ENCODE measurements at regions of chr19 and their contacts with region 1.

Region 1: GRCh38 chr19:12681074-12681951 is at the start of gene DHPS:
- DNase-seq: peak; percentile 81 to 99 (median 90)
- ATAC-seq: peak; percentile 74
- H3K4me3 ChIP-seq: peak within 1 kb of the TSS; percentile 83 to 96
- H3K4me3 Mint-ChIP-seq: peak within 1 kb of the TSS; percentile 96
- H3K27ac ChIP-seq: peak within 1 kb of the TSS; percentile 82 to 97
- H3K27ac Mint-ChIP-seq: peak within 1 kb of the TSS; percentile 92
- H3K4me1 ChIP-seq: peaks cover 19% of the 10 kb centered on the region
- H3K4me1 Mint-ChIP-seq: peaks cover 29% of the 10 kb centered on the region
- H3K27me3 ChIP-seq: no peaks in the 10 kb centered on the region
- H3K27me3 Mint-ChIP-seq: no peaks in the 10 kb centered on the region
- CTCF ChIP-seq: no peak
- total RNA-seq, gene DHPS: 98.7 to 100 TPM

Region 2: DNA sequence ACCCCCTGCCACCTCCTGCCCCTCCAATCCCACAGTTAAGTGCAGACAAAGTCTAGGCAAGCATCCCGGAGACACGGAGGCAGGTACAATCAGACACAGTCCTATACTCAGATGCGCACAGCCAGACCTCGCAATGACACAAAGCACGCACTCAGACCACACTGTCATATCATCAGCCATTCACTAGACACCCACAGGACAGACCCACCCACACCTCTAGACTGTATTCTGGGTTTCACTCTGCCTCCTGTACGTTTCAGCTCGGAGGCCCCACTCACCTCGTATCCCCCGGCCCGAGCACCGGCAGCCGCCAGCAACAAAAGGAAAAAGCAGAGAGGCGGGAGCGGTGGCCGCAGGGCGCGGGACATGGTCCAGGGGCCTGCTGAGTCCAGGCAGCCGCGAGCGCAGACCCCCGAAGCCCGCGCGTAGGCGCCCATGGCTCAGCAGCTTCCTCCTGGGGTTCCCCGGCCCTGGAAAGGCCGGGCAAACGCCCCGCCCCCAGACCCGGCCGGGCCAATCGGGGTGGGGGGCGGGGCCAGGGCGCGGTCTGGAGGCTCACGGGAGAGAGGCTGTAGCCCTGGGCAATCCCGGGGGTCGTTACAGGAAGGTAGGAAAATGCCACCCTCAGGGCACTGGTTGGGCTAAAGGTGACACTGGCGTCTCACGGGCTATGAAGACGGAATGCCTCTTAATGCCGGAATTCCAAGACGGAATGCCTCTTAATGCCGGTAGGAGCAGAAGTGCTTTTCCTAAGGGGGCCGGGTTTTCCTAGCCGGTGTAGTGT is 14.9 kb before region 1 on chr19 and contains the starts of genes MAN2B1 and WDR83:
- CTCF ChIA-PET with region 1: interaction called, 22 read pairs
- POLR2A ChIA-PET with region 1: interaction called, 10 read pairs
- intact Hi-C with region 1: loop called (anchors 1 kb)
- DNase-seq: peak; percentile 57 to 92 (median 77)
- ATAC-seq: peak; percentile 72
- H3K4me3 ChIP-seq: peak within 1 kb of the TSS; percentile 82 to 84
- H3K4me3 Mint-ChIP-seq: peak within 1 kb of the TSS; percentile 90
- H3K27ac ChIP-seq: peak within 1 kb of the TSS; percentile 69 to 99
- H3K27ac Mint-ChIP-seq: peak within 1 kb of the TSS; percentile 94
- H3K4me1 ChIP-seq: peaks cover 46% of the 10 kb centered on the region
- H3K4me1 Mint-ChIP-seq: peaks cover 54% of the 10 kb centered on the region
- H3K27me3 ChIP-seq: no peaks in the 10 kb centered on the region
- H3K27me3 Mint-ChIP-seq: no peaks in the 10 kb centered on the region
- CTCF ChIP-seq: no peak
- total RNA-seq, gene MAN2B1: 74.8 to 82.2 TPM
- total RNA-seq, gene WDR83: 7.4 to 10.0 TPM

Region 3: DNA sequence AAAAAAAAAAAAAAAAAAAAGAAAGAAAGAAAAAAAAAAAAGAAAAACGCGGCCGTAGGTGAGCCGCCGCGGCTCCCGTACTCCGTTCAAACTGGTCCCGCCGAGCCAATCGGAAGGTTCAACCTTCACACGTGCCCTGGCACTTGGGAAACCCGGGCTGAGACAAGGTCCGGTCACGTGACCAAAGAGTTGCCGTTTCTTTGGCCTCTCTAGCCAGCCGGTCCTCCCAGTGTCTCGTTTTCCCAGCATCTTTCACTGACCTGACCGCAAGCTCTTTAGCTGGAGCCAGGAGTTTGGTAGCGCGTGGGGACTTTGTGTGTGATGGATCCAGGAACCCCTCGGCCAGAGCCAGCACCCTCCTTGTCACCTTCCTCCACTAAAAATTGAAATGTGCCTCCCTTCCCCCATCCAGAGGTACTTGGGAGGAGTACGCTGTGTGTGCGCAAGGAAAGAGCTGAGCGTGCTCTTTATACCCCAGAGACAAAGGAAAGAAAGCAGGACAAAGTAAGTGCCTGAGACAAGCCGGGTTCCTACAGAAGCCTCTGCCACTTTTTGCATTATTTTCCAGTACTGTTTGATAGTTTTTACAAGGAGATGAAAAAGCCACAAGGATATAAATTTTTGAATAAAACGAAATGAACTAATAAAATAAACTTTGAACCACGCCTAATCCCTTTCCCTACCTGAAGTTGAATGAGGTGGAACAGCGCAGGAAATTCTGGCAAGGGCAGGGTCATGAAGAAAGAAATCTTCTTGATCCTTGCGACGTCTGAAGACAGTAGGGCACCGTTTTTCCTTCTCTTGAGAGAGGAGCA is 41.5 kb after region 1 on chr19:
- CTCF ChIA-PET with region 1: interaction called, 5 read pairs
- POLR2A ChIA-PET with region 1: interaction called, 8 read pairs
- intact Hi-C with region 1: loop called (anchors 1 kb)
- DNase-seq: peak; percentile 81 to 99 (median 92)
- ATAC-seq: peak; percentile 88
- H3K4me3 ChIP-seq: peak overlapping the region; percentile 78 to 85
- H3K4me3 Mint-ChIP-seq: peak overlapping the region; percentile 93
- H3K27ac ChIP-seq: peak overlapping the region; percentile 55 to 80
- H3K27ac Mint-ChIP-seq: peak overlapping the region; percentile 89
- H3K4me1 ChIP-seq: peaks cover 28% of the 10 kb centered on the region
- H3K4me1 Mint-ChIP-seq: peaks cover 37% of the 10 kb centered on the region
- H3K27me3 ChIP-seq: no peaks in the 10 kb centered on the region
- H3K27me3 Mint-ChIP-seq: no peaks in the 10 kb centered on the region
- CTCF ChIP-seq: no peak

Region 4: GRCh38 chr19:12777217-12778016 is 96.1 kb after region 1 on chr19:
- CTCF ChIA-PET with region 1: no interaction called
- POLR2A ChIA-PET with region 1: interaction called, 3 read pairs
- intact Hi-C with region 1: loop called in 1 of 2 experiments (anchors 1 kb)
- DNase-seq: peak; percentile 68 to 89 (median 80)
- ATAC-seq: peak; percentile 4
- H3K4me3 ChIP-seq: peak overlapping the region; percentile 63 to 86
- H3K4me3 Mint-ChIP-seq: peak overlapping the region; percentile 82
- H3K27ac ChIP-seq: peak overlapping the region; percentile 57 to 87
- H3K27ac Mint-ChIP-seq: peak overlapping the region; percentile 85
- H3K4me1 ChIP-seq: peaks cover 38% of the 10 kb centered on the region
- H3K4me1 Mint-ChIP-seq: peaks cover 36% of the 10 kb centered on the region
- H3K27me3 ChIP-seq: no peaks in the 10 kb centered on the region
- H3K27me3 Mint-ChIP-seq: no peaks in the 10 kb centered on the region
- CTCF ChIP-seq: peak; percentile 97

Region 5: DNA sequence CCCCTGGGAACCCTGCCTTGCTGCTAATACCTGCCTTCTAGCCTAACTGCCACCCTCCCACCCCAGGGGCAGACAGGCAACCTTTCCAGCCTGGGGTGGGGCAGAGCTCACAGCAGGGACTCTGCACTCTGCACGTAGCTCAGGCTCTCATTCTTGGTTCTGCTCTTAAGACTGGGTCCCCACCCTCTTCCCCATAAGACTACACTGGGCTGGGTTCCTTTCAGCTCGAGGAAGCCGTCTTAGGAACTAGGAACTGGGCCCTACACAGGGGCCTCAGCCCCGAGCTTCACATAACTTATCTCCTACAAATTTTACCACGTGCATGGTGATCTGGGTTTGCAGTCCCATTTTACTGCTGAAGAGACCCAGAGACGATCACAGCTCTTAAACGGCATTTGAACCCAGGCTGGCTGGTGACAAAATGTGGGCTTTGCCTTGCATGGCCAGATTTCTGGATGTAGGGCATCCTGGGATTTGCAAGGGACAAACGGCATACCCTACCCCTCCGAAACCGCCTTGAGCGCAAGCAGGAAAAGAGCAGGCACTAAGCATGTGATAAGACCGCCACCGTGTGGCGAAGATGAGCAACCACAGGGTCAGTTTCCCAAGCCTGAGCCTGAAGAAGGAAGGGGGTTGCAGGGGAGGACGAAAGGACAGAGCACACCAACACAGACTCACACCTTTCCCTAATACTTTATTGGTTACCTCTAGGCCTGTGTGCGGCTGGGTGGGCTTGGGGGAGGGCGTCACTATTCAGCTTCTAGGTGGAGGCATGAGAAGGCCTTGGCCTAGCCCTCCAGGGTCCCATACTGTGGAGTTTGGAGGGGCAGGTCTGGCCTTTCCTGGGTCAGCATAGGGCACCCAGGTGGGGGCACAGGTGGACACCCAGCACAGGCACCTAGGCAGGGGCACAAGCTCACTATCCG is 115.1 kb after region 1 on chr19:
- CTCF ChIA-PET with region 1: interaction called, 6 read pairs
- POLR2A ChIA-PET with region 1: interaction called, 3 read pairs
- intact Hi-C with region 1: loop called (anchors 1 to 5 kb)
- DNase-seq: peak; percentile 46 to 88 (median 78)
- ATAC-seq: peak; percentile 6
- H3K4me3 ChIP-seq: peak overlapping the region; percentile 5 to 25
- H3K4me3 Mint-ChIP-seq: peak overlapping the region; percentile 70
- H3K27ac ChIP-seq: peak overlapping the region in 1 of 2 experiments; percentile 36
- H3K27ac Mint-ChIP-seq: peak overlapping the region; percentile 89
- H3K4me1 ChIP-seq: peaks cover 36% of the 10 kb centered on the region
- H3K4me1 Mint-ChIP-seq: peaks cover 38% of the 10 kb centered on the region
- H3K27me3 ChIP-seq: no peaks in the 10 kb centered on the region
- H3K27me3 Mint-ChIP-seq: no peaks in the 10 kb centered on the region
- CTCF ChIP-seq: peak; percentile 86

Measured in CD8-positive, alpha-beta T cell (primary cell).